ENCODE measurements at regions of chr10 and their contacts with region 1.

Region 1: DNA sequence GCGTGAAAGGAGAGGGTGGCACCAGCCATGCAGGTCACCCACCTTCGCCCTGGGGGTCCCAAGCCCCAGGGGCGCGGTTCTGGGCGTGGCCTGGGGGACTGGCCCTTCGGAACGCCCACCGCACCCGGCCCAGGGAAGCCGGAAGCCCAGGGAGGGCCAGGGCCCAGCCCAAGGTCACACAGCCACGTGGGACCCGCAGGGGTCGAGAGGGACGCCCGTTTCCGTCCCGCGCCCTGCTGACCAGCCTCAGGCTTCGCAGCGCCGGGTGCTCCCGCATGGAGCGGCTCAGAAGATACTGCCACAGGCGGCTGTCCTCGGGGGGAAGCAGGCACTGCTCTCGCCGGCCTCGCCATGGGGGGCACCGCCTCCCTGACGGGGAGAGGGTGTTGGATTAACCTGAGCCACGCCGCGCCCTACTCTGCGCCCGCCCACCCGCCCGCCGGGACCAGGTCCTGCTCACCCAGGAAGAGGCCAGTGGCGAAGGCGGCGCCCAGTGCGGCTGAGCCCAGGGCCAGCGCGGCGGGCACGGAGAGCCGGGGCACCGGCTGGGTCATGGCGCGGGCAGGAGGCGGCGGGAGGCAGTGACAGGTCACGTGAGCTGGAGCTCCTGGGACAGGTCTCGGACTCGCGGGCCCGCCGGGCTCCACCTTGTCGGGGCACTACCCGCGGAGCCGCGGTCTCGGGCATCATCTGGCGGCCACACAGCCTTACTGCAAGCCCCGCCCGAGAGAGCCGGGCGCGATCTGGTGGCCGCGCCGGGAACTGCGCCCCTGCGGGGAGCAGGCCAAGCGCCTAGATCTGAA is at the start of gene COMTD1:
- DNase-seq: peak; percentile 95
- ATAC-seq: peak; percentile 77 to 81
- total RNA-seq, gene COMTD1: 22.7 to 28.2 TPM

Region 2: DNA sequence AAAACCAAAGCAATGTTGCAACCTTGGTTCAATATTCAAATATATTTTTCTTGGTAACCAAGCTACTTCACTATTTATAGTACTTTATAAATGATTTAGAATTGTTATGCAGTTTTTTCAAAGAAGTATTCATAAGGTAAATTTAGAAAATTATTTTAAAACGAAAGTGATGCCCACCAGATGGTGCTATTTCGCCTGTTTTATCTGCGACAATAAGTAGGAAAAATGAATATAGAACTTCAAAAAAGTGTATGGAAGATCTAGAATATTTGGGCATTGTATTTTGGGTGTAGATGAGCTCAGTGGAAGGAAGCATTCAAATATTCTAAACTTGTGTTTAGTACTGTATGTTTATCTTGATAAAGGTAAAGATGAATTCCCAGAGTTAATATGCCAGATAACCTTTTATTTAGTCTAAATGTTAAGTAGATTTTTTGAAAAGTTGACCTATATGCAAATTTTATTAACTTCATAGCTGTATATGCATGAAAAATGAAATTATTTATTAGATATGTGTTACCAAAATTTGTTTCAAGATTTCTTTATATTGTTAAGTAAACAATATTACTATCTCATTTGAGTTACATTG is 991.4 kb before region 1 on chr10:
- intact Hi-C with region 1: loop called in 1 of 2 experiments (anchors 5 kb)
- DNase-seq: no peak
- ATAC-seq: no peak

Region 3: DNA sequence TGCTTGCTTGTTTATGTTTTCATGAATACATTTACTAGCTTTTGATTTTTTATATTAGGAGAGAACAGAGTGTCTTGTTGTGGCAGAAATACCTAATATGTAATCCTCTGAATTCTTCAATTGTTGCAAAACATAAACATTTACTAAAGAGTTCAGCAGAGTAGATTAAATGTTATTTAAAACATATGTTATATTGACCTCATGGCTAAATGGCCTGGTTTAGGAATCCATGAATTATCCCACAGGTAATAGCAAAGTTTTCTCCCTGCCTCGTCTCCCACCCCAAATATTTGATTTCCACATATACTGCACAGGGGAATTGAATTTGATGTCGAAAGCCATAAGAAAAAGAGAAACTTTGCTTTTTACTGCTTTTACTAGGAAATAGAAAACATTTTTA is 972.7 kb before region 1 on chr10:
- intact Hi-C with region 1: loop called in 1 of 2 experiments (anchors 5 kb)
- DNase-seq: no peak
- ATAC-seq: no peak

Region 4: DNA sequence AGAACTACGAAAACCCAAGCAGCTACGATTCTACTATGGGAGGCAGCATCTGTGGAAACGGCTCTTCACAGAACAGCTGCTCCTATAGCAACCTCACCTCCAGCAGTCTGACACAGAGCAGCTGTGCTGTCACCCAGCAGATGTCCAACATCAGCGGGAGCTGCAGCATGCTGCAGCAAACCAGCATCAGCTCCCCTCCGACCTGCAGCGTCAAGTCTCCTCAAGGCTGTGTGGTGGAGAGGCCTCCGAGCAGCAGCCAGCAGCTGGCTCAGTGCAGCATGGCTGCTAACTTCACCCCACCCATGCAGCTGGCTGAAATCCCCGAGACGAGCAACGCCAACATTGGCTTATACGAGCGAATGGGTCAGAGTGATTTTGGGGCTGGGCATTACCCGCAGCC is 205.7 kb before region 1 on chr10:
- intact Hi-C with region 1: loop called in 1 of 2 experiments (anchors 10 kb)
- DNase-seq: peak; percentile 41
- ATAC-seq: peak in 1 of 2 donors; percentile 68

Region 5: GRCh38 chr10:75099952-75100763 is 135.4 kb before region 1 on chr10:
- intact Hi-C with region 1: no loop called
- DNase-seq: peak; percentile 81
- ATAC-seq: peak; percentile 88

Region 6: DNA sequence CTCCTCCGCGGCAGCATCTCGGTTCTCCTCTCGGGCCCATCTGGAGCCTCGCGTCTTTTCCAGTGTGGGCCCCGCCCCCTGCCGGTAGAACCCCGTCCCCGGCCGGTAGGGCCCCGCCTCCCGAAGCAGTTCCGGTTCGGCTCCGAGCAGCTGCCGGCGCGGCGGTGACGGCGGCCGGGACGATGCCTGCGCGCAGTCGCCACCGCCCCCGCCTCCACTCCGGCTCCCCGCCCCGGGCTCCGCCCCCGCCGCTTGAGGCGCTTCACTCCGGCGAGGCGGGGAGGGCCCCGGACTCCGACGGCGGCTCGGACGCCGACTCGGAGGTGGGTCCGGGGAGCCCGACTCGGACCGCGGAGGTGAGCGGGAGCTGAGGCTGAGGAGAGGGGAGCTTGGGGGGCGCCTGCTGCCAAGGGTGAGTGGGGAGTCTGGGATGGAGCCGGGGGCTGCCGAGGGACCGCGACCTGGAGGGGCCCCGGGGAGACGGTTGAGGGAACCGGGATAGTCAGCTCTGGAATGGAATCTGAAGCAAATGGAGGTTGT is 124.1 kb before region 1 on chr10 and contains the start of gene SAMD8:
- intact Hi-C with region 1: loop called (anchors 2 to 10 kb)
- DNase-seq: peak; percentile 98
- ATAC-seq: peak; percentile 91
- total RNA-seq, gene SAMD8: 21.9 to 23.8 TPM

Region 7: GRCh38 chr10:75127471-75127870 is 108.1 kb before region 1 on chr10:
- intact Hi-C with region 1: no loop called
- DNase-seq: no peak
- ATAC-seq: no peak

Region 8: DNA sequence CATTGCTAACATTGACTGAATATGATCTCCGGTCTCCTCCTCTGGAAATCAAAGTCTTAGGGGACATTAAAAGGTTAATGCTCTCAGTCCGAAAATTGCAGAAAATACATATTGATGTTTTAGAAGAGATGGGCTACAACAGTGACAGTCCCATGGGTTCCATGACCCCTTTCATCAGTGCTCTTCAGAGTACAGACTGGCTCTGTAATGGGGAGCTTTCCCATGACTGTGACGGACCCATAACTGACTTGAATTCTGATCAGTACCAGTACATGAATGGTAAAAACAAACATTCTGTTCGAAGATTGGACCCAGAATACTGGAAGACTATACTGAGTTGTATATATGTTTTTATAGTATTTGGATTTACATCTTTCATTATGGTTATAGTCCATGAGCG is 84.9 kb before region 1 on chr10:
- intact Hi-C with region 1: no loop called
- DNase-seq: no peak
- ATAC-seq: no peak

Region 9: GRCh38 chr10:75187961-75188426 is 47.6 kb before region 1 on chr10:
- intact Hi-C with region 1: loop called (anchors 5 to 10 kb)
- DNase-seq: peak; percentile 45
- ATAC-seq: peak; percentile 7 to 21